ENCODE measurements at regions of chr12 and their contacts with region 1.

Region 1: GRCh38 chr12:51528852-51529654 is 62.0 kb upstream of the SCN8A start:
- DNase-seq: no peak
- CTCF ChIP-seq: no peak

Region 2: GRCh38 chr12:51424662-51425438 is 104.2 kb before region 1 on chr12 and contains the start of gene SLC4A8:
- in situ Hi-C with region 1: loop called (anchors 5 kb)
- DNase-seq: peak; percentile 96
- CTCF ChIP-seq: peak; percentile 91

Region 3: DNA sequence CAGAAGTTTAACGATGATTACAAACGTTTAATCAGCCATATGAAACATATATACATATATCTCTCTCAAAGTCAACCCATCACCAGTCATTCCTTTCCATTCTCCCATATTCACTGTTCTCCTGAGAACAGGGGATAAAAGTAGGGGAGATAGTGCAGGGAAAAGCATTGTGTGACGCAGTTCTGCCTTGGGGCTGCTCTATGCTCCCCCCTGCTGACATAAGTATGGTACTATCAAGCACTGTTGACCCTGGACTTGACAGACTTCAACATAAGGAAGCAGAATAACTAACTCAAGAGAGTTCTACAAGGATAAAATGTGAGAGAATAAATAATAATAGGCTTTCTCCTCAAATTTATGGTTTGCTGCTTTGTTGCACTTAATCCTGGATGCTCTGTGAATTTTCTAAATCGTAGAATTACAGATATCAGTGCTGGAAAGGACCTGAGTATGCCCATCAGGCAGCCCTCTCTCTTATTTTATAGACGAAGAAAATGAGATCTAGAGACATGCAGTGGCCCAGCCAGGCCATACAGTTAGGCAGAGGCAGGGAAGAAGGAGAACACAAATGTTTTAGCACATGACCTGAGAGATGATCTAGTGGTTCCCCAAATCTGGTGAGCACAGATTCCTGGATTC is 149.2 kb after region 1 on chr12:
- in situ Hi-C with region 1: no loop called
- DNase-seq: peak; percentile 56
- CTCF ChIP-seq: peak; percentile 65

Region 4: GRCh38 chr12:51705450-51705849 is 176.4 kb after region 1 on chr12:
- in situ Hi-C with region 1: no loop called
- DNase-seq: no peak
- CTCF ChIP-seq: no peak